CD8-positive, alpha-beta T cell (primary cell): ENCODE measurements at regions of chr1 and their contacts with region 1.

Region 1: DNA sequence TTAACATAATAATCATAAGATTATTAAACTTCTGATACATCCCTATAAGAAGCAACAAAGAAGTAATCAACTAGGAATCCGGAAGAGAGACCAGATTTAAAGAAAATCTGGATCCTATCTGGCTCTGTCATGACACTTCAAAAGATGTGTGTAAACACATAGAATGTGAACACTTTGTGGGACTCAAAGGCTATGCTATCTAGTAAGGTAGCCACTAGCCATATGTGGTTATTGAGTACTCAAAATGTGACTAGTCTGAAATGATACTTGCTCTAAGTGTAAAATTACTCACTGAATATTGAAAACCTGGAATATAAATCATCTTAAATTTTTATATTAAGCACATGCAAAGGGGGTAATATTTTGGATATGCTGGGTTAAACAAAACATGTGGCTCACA is 8.7 kb downstream of the FUBP1 start:
- DNase-seq: no peak
- ATAC-seq: no peak
- H3K4me3 ChIP-seq: no peak overlapping the region
- H3K4me3 Mint-ChIP-seq: peak overlapping the region; percentile 15
- H3K27ac ChIP-seq: no peak overlapping the region
- H3K27ac Mint-ChIP-seq: no peak overlapping the region
- H3K4me1 ChIP-seq: peaks cover 65% of the 10 kb centered on the region
- H3K4me1 Mint-ChIP-seq: peaks cover 79% of the 10 kb centered on the region
- H3K27me3 ChIP-seq: no peaks in the 10 kb centered on the region
- H3K27me3 Mint-ChIP-seq: no peaks in the 10 kb centered on the region
- CTCF ChIP-seq: no peak

Region 2: DNA sequence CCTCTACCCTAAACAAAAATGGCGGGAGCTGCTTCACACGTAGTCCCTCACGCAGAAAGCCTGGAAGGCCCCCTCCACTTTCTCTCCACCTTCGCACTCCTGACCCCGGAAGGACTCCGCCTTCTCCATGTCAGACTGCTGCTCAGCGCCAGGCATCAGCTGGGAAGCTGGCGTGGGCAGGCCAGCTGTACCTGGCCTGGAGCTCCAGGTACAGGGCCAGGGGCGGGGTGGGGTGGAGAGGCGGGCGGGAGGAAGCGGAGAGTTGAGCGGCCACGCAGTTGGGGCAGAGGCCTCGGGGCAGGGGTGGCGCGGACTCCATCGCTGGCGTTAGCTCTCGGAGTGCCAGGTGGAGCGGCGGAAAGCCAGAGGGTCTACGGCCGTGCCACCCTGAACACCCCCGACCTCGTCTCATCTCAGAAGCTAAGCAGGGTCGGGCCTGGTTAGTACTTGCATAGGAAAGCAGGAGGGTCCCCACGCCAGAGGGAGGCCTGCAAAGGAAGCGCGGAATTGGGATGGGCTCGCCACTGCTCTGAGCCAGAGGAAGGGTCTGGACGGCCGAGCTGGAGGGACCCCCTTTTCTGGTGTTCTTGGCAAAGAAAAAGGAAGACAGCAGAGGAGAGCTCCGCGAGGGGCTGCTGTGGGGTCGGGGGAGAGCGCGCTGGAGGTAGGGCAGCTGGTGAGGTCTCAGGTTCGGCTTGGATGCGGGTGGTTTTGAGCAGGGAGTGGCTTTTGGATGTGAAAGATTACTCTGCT is 190.5 kb before region 1 on chr1 and contains the start of gene MIGA1:
- CTCF ChIA-PET with region 1: no interaction called
- POLR2A ChIA-PET with region 1: no interaction called
- intact Hi-C with region 1: no loop called
- DNase-seq: peak; percentile 73 to 96 (median 89)
- ATAC-seq: peak; percentile 97
- H3K4me3 ChIP-seq: peak within 1 kb of the TSS; percentile 86 to 90
- H3K4me3 Mint-ChIP-seq: peak within 1 kb of the TSS; percentile 97
- H3K27ac ChIP-seq: peak within 1 kb of the TSS; percentile 61 to 65
- H3K27ac Mint-ChIP-seq: peak within 1 kb of the TSS; percentile 90
- H3K4me1 ChIP-seq: peaks cover 28% of the 10 kb centered on the region
- H3K4me1 Mint-ChIP-seq: peaks cover 41% of the 10 kb centered on the region
- H3K27me3 ChIP-seq: no peaks in the 10 kb centered on the region
- H3K27me3 Mint-ChIP-seq: no peaks in the 10 kb centered on the region
- CTCF ChIP-seq: no peak
- total RNA-seq, gene MIGA1: 11.8 to 13.5 TPM

Region 3: DNA sequence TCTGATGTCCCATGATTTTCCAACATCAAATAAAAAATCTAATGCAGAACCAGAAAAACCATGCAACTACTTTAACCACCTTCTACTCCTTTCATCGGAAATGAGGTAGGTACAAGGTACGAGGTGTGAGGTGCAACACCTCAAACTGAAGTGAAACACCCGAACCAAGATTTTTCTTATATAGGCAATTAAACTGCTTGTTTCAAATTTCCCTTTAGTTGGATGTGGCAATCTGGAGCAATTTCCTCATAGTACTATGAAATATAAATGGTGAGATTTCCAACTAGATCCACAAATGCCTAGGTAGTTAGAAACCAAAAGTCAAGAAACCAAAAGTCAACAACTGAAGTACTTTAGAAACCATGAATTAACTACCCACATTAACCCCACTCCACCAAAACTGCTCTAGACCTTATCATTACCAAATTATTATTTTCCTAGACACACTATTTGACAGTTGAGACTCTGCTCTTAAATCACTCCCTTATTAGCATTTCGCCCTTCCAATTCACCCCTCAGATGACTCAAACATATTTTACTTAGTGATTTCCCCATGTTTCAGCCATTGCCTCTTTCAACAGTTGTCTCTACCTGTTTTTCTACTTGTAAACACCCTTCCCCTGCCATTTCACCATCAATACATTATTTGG is 29.1 kb before region 1 on chr1:
- CTCF ChIA-PET with region 1: no interaction called
- POLR2A ChIA-PET with region 1: no interaction called
- intact Hi-C with region 1: no loop called
- DNase-seq: no peak
- ATAC-seq: no peak
- H3K4me3 ChIP-seq: no peak overlapping the region
- H3K4me3 Mint-ChIP-seq: no peak overlapping the region
- H3K27ac ChIP-seq: no peak overlapping the region
- H3K27ac Mint-ChIP-seq: peak overlapping the region; percentile 28
- H3K4me1 ChIP-seq: no peaks in the 10 kb centered on the region
- H3K4me1 Mint-ChIP-seq: peaks cover 11% of the 10 kb centered on the region
- H3K27me3 ChIP-seq: no peaks in the 10 kb centered on the region
- H3K27me3 Mint-ChIP-seq: no peaks in the 10 kb centered on the region
- CTCF ChIP-seq: no peak

Region 4: DNA sequence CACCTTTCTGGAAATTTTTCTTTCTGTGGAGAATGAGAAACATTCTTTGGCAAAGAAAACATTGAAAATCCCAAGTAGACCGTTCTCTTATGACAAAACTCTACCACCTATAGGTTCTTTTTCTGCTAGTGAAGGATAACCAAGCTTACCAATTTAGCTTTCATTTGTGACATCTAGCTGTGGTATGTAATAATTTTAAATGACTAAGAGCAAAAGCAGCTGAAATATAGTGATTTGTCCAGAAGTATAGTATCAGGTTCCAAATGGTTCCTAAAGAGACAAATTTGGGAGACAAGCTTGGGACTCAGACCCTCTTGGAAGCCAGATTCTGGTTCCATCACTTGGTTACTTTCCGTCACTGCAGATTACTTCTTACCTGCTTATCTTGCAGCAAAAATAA is 15.7 kb before region 1 on chr1:
- CTCF ChIA-PET with region 1: no interaction called
- POLR2A ChIA-PET with region 1: no interaction called
- intact Hi-C with region 1: loop called (anchors 1 to 2 kb)
- DNase-seq: no peak
- ATAC-seq: no peak
- H3K4me3 ChIP-seq: no peak overlapping the region
- H3K4me3 Mint-ChIP-seq: no peak overlapping the region
- H3K27ac ChIP-seq: no peak overlapping the region
- H3K27ac Mint-ChIP-seq: no peak overlapping the region
- H3K4me1 ChIP-seq: no peaks in the 10 kb centered on the region
- H3K4me1 Mint-ChIP-seq: peaks cover 25% of the 10 kb centered on the region
- H3K27me3 ChIP-seq: no peaks in the 10 kb centered on the region
- H3K27me3 Mint-ChIP-seq: no peaks in the 10 kb centered on the region
- CTCF ChIP-seq: no peak

Region 5: DNA sequence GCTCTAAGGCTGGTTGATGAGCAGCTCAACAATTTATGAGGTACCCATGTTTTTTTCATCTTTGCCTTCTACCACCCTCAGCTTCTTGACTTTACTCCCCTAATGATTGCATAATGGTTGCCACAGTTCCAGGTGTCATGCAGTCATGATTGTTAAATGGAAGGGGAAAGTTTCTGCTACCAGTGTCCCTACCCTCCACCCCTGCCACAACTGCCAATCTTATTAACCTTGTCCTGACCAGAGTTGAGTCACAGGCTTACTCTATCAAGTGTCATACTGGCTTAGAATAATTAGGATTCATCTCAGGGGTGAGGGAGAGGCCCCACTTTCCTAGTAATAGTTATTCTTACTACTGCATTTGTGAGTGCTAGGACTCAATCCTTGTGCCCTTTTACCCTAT is 16.6 kb after region 1 on chr1:
- CTCF ChIA-PET with region 1: no interaction called
- POLR2A ChIA-PET with region 1: no interaction called
- intact Hi-C with region 1: loop called in 1 of 2 experiments (anchors 2 kb)
- DNase-seq: no peak
- ATAC-seq: no peak
- H3K4me3 ChIP-seq: no peak overlapping the region
- H3K4me3 Mint-ChIP-seq: no peak overlapping the region
- H3K27ac ChIP-seq: no peak overlapping the region
- H3K27ac Mint-ChIP-seq: no peak overlapping the region
- H3K4me1 ChIP-seq: peaks cover 3% of the 10 kb centered on the region
- H3K4me1 Mint-ChIP-seq: peaks cover 32% of the 10 kb centered on the region
- H3K27me3 ChIP-seq: no peaks in the 10 kb centered on the region
- H3K27me3 Mint-ChIP-seq: no peaks in the 10 kb centered on the region
- CTCF ChIP-seq: no peak